Activated B cell treated with CpG ODN at 0.5 μM for 24 hours (primary cell): ENCODE measurements at regions of chr1 and their contacts with region 1.

Region 1: GRCh38 chr1:116737020-116737854 is 17.0 kb upstream of the CD2 start:
- DNase-seq: peak; percentile 34
- ATAC-seq: peak; percentile 70
- H3K4me3 Mint-ChIP-seq: peak overlapping the region; percentile 45
- H3K27ac Mint-ChIP-seq: peak overlapping the region; percentile 4
- H3K4me1 Mint-ChIP-seq: peaks cover 25% of the 10 kb centered on the region
- H3K27me3 Mint-ChIP-seq: no peaks in the 10 kb centered on the region
- CTCF ChIP-seq: peak; percentile 45

Region 2: GRCh38 chr1:116724765-116725375 is 12.4 kb before region 1 on chr1:
- CTCF ChIA-PET with region 1: interaction called, 12 read pairs
- POLR2A ChIA-PET with region 1: no interaction called
- intact Hi-C with region 1: no loop called
- DNase-seq: no peak
- ATAC-seq: peak; percentile 54
- H3K4me3 Mint-ChIP-seq: no peak overlapping the region
- H3K27ac Mint-ChIP-seq: no peak overlapping the region
- H3K4me1 Mint-ChIP-seq: peaks cover 6% of the 10 kb centered on the region
- H3K27me3 Mint-ChIP-seq: no peaks in the 10 kb centered on the region
- CTCF ChIP-seq: peak; percentile 60

Region 3: DNA sequence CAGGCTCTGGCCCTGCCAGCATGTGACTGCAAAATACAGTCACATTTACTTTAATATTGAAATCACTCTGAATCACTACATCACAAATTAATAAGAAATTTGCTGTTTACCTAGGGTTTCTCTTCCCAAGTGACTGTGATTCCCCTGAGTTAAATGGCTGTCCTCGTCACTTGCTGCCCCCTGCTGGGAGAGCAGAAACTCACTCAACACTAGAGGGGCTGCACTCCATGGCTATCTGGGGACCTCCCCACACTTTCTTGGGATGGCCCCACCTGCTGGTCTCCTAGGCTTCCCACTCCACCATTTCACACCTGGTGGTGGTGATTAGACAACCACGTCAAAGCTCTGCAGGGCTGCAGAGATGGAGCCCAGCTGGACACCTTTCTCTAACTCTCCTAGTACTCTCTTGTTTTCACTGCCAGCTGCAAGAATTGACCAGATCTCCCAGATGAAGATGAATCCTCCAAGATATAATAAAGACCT is 80.4 kb after region 1 on chr1:
- CTCF ChIA-PET with region 1: interaction called, 27 read pairs
- POLR2A ChIA-PET with region 1: no interaction called
- intact Hi-C with region 1: loop called (anchors 1 kb)
- DNase-seq: peak; percentile 33
- ATAC-seq: peak; percentile 66
- H3K4me3 Mint-ChIP-seq: no peak overlapping the region
- H3K27ac Mint-ChIP-seq: no peak overlapping the region
- H3K4me1 Mint-ChIP-seq: peaks cover 9% of the 10 kb centered on the region
- H3K27me3 Mint-ChIP-seq: no peaks in the 10 kb centered on the region
- CTCF ChIP-seq: no peak

Region 4: DNA sequence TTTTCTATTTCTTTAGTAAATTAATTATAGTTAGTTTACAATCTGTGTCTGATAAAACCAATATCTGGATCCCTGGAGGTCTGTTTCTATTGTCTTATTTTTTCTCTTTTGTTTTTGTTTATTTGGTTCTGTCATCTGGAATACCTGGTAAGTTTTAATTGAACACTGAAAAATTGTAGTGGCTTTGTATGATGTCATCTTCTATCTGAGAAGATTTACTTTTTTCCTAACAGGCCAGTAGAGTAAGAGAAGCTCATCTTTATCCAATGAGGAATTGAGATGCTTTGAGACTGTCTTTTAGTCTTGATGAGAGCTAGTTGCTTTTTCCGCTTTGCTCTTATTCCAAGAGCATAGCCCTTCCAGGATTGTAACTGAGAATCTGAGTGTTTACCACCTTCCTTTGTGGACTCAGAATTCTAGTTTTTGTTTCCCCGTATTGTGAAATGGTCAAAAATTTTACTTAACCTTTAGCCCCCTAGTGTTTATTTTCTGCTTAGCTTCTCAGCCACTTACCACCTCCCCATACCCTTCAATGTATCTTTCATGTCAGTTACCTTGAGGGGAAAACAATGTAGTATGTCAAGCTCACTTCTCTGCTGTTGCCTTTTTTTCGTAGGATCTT is 197.5 kb after region 1 on chr1:
- CTCF ChIA-PET with region 1: interaction called, 4 read pairs
- POLR2A ChIA-PET with region 1: no interaction called
- intact Hi-C with region 1: loop called (anchors 5 kb)
- DNase-seq: no peak
- ATAC-seq: no peak
- H3K4me3 Mint-ChIP-seq: no peak overlapping the region
- H3K27ac Mint-ChIP-seq: no peak overlapping the region
- H3K4me1 Mint-ChIP-seq: no peaks in the 10 kb centered on the region
- H3K27me3 Mint-ChIP-seq: peaks cover 7% of the 10 kb centered on the region
- CTCF ChIP-seq: no peak

Region 5: GRCh38 chr1:117051224-117052064 is 314.2 kb after region 1 on chr1:
- CTCF ChIA-PET with region 1: interaction called, 36 read pairs
- POLR2A ChIA-PET with region 1: interaction called, 3 read pairs
- intact Hi-C with region 1: loop called (anchors 1 kb)
- DNase-seq: no peak
- ATAC-seq: peak; percentile 66
- H3K4me3 Mint-ChIP-seq: peak overlapping the region; percentile 71
- H3K27ac Mint-ChIP-seq: peak overlapping the region; percentile 79
- H3K4me1 Mint-ChIP-seq: peaks cover 43% of the 10 kb centered on the region
- H3K27me3 Mint-ChIP-seq: no peaks in the 10 kb centered on the region
- CTCF ChIP-seq: no peak

Region 6: DNA sequence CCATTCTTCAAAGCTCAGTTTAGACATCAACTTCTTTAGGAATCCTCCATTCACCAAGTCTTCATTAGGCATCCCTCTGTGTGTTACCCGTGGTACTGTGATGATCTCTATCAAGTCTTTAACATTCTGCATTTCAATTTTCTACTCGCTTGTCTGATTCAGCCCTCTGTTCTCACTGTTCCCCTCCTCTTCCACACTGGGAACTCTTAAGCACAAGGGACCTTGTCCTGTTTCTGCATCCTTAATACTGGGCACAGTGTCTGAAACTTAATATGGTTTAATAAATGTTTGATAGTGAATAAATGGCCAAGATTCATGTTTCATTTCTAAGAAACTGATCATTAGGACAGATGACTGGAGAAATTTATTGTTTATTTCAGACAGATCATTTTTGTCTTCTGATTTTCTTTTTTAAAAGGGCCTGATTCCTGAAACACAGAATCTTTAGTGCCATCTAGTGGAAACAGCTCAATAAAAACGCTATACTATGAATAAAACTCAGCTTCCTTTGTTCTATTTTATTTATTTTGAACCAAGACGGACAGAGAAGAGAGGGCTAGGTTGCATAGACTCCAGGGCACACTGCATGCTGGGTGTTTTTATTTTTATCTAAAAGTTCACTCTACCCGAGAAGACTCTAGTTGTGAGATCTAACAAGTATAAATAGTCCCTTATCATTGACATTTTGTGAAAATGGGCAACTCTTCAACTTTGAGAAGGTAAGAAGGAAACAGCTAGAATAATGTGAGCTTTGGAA is 391.3 kb after region 1 on chr1:
- CTCF ChIA-PET with region 1: interaction called, 11 read pairs
- POLR2A ChIA-PET with region 1: no interaction called
- intact Hi-C with region 1: loop called (anchors 1 kb)
- DNase-seq: no peak
- ATAC-seq: no peak
- H3K4me3 Mint-ChIP-seq: no peak overlapping the region
- H3K27ac Mint-ChIP-seq: no peak overlapping the region
- H3K4me1 Mint-ChIP-seq: peaks cover 1% of the 10 kb centered on the region
- H3K27me3 Mint-ChIP-seq: peaks cover 4% of the 10 kb centered on the region
- CTCF ChIP-seq: no peak